Left ventricle myocardium superior (tissue), 1 donor: ENCODE measurements at regions of chr4 and their contacts with region 1.

Region 1: GRCh38 chr4:45442466-45442865 is 681.4 kb downstream of the GABRG1 start:
- DNase-seq: no peak
- ATAC-seq: peak; percentile 53

Region 2: DNA sequence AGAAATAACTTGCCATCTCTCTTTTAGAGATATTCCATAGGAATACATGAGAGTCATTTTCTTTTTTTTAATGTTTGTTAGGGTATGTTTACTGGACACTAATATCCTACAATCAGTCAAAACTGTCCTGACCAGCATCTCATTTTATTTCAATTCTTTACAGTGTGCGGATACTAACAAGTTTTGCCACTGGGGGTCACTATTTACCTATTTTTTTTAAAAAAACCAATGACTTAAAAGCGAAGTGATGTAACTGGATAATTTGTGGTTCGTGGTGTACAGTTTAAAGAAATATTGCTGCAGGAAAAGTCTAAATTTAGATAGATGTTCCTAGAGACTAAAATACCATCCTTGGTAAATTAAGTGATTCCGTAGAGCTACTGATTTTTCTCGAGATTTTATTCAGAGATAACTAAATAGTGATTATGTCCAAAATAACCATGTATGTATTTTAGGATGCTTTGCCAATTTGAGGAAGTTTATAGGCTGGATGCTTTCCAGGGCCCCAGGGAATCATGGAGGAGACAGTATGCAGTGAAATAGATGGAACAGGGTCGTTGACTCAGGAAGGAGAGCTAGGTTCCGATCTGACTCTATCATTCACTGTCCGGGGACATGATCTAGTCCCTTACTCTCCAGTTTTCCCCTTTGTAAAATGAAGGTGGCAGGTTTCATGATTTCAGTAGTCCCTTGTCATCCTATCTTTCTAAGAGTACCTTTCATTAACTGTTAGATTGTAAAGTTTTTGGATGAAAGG is 682.1 kb before region 1 on chr4:
- intact Hi-C with region 1: loop called (anchors 10 kb)
- DNase-seq: no peak
- ATAC-seq: peak; percentile 77

Region 3: GRCh38 chr4:45120163-45120562 is 322.3 kb before region 1 on chr4:
- intact Hi-C with region 1: loop called (anchors 5 kb)
- DNase-seq: no peak
- ATAC-seq: peak; percentile 98